ENCODE measurements at regions of chr1 and their contacts with region 1.

Region 1: DNA sequence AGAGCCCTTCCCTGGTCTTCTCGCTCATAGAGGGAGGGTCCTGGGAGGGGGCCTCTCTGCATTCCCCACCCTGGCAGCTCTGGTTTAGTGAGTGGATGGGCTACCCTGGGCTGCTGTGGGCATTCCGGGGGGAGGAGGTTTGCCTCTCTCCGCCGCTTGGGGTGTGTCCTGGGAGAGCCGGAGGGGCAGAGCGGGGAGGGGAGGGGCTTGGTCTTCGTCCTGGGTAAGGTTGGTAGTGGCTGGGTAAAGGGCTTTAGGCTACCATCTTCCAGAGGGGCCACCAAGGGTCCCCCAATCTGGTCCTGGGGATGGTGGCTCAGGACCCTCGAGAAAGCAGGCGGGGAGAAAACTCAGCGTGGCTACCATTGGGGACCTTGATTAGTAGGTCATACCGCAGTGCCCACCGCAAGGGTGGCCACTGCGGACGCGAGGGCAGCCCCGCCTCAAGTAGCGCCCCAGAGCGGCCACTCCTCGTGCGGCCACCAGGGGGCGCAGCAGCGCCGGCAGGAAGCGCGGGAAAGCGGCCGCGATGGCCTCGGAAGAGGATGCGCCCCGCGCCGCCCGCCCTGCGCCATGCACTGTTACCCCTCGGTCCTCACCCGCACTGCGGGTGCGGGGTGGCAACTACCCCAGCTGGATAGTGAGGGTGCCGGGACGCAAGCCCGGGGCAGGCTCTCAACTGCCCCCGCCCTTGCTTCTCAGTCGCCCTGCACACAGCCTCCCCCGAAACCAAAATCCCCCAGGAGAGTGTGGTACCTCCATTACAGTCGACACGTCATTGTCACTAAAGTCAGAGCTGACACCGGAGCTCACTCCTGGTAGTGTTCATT is 44.1 kb upstream of the SLC25A33 start:
- DNase-seq: peak; percentile 19 to 88 (median 66)
- ATAC-seq: peak; percentile 63 to 79 (median 77)
- H3K4me3 ChIP-seq: peak overlapping the region in 1 of 4 donors; percentile 30
- H3K27ac ChIP-seq: no peak overlapping the region
- H3K4me1 ChIP-seq: no peaks in the 10 kb centered on the region
- H3K27me3 ChIP-seq: no peaks in the 10 kb centered on the region
- CTCF ChIP-seq: peak; percentile 96 to 99 (median 98)

Region 2: DNA sequence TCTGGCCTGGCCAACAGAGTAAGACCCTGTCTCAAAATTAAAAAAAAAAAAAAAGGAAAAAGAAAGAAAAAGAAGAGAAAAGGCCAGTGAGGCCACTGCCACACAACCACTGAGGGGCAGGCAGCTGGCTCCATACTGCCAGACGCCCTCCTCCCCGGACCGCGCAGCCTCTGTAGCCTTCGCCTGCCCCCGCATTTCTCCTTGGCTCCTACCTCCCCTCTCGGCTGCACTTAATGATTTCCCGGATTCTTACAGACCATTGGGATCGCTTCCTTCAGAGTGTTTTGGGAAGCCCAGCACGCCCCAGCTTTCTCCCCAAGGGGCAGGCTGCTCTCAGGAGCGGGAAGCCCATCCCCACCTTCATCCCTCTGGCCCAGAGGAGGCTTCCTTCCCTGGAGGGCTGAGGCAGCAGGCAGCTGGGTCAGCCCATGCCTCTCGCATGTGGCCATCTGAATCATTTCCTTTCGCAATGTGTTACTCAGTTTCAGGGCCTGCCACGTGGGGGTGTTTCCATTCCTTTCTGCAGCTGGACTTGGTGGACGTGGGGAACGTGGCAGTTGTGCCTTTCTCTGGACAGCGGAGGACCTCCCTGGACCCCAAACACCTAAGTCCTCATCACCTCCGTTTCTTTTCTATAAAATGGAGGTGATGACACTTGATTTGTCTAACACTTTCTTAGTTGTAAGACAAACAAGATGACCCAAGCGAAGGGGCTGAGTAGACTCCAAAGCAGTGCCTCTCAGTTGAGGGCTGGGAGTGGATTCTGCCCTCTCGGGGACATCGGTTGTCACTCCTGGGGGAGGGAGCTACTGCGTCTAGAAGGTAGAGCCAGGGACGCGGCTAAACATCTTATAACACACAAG is 428.0 kb before region 1 on chr1:
- intact Hi-C with region 1: no loop called
- DNase-seq: peak in 3 of 6 donors; percentile 18 to 58 (median 23)
- ATAC-seq: peak in 3 of 4 donors; percentile 66 to 75 (median 73)
- H3K4me3 ChIP-seq: no peak overlapping the region
- H3K27ac ChIP-seq: no peak overlapping the region
- H3K4me1 ChIP-seq: no peaks in the 10 kb centered on the region
- H3K27me3 ChIP-seq: no peaks in the 10 kb centered on the region
- CTCF ChIP-seq: no peak

Region 3: DNA sequence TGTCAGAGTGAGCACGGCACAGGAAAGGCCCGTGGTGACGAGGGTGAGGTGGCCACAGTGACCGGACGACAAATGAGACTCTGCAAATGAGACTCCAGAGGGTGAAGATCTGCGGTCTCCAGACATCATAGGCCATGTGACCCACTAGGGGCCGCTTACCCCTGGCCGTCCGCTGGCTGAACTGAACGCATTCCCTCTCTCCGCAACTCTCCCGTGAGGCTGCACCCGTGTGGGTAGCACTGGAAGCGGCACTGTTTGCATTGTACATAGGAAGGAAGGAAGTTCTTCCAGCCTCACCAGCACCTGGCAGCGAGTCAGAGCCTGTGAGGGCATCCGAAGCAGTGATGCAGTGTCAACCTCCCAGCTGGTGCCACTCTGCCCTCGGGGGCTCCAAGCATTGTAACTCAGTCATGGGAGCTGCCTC is 226.1 kb before region 1 on chr1:
- intact Hi-C with region 1: loop called in 1 of 3 experiments (anchors 10 kb)
- DNase-seq: no peak
- ATAC-seq: no peak
- H3K4me3 ChIP-seq: no peak overlapping the region
- H3K27ac ChIP-seq: no peak overlapping the region
- H3K4me1 ChIP-seq: no peaks in the 10 kb centered on the region
- H3K27me3 ChIP-seq: no peaks in the 10 kb centered on the region
- CTCF ChIP-seq: no peak

Region 4: GRCh38 chr1:9289090-9289534 is 206.0 kb before region 1 on chr1:
- intact Hi-C with region 1: loop called in 1 of 3 experiments (anchors 5 kb)
- DNase-seq: peak; percentile 58 to 94 (median 73)
- ATAC-seq: peak in 2 of 4 donors; percentile 36 to 44
- H3K4me3 ChIP-seq: no peak overlapping the region
- H3K27ac ChIP-seq: no peak overlapping the region
- H3K4me1 ChIP-seq: peaks cover 0 to 9% (median 0%) of the 10 kb centered on the region in 3 donors
- H3K27me3 ChIP-seq: no peaks in the 10 kb centered on the region
- CTCF ChIP-seq: peak; percentile 73 to 80 (median 74)

Region 5: GRCh38 chr1:9573723-9574122 is 78.6 kb after region 1 on chr1:
- intact Hi-C with region 1: loop called (anchors 5 to 10 kb)
- DNase-seq: no peak
- ATAC-seq: peak in 2 of 4 donors; percentile 32 to 34
- H3K4me3 ChIP-seq: no peak overlapping the region
- H3K27ac ChIP-seq: no peak overlapping the region
- H3K4me1 ChIP-seq: no peaks in the 10 kb centered on the region
- H3K27me3 ChIP-seq: no peaks in the 10 kb centered on the region
- CTCF ChIP-seq: peak in 2 of 4 donors; percentile 12 to 13